Mammary epithelial cell (primary cell): ENCODE measurements at regions of chrX and their contacts with region 1.

Region 1: GRCh38 chrX:130916636-130917422 is 13.8 kb upstream of the ENOX2 start:
- DNase-seq: peak; percentile 21
- H3K4me3 ChIP-seq: no peak overlapping the region
- H3K27ac ChIP-seq: no peak overlapping the region
- H3K4me1 ChIP-seq: no peaks in the 10 kb centered on the region
- H3K27me3 ChIP-seq: no peaks in the 10 kb centered on the region
- CTCF ChIP-seq: peak; percentile 65 to 87

Region 2: GRCh38 chrX:130330706-130331105 is 586.1 kb before region 1 on chrX:
- CTCF ChIA-PET with region 1: interaction called, 7 read pairs
- dilution Hi-C with region 1: no loop called
- in situ Hi-C with region 1: no loop called
- intact Hi-C with region 1: loop called (anchors 1 kb)
- DNase-seq: peak; percentile 46
- H3K4me3 ChIP-seq: no peak overlapping the region
- H3K27ac ChIP-seq: no peak overlapping the region
- H3K4me1 ChIP-seq: no peaks in the 10 kb centered on the region
- H3K27me3 ChIP-seq: no peaks in the 10 kb centered on the region
- CTCF ChIP-seq: peak; percentile 50 to 66

Region 3: DNA sequence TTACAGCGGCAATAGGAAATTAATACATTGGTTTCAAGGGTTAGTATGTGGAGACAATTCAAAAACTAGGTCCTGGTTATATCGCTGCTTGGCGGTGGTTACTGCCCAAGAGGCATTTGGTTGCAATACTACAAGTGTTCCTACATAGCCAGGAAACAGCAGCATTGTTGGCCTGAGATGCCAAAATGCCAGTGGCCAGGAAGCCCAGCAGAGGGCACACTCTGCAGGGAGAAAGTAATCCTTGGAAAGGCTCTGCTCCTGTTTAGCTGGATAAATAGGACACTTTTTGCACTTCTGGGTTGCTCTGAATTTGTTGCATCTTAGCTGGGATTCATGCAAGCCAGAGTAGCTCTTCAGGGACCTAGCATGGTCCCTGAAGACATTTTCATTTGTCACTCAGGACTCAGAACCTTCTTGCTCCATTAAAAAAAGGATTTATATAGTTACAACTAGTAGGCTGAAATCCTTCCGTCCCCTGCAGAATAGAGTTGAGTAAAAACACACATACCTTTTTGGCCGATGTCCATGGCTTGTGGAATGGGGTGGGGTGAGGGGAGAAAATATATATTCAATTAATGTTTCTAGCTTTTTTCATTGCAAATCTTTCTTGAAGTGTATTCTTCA is 523.3 kb before region 1 on chrX:
- CTCF ChIA-PET with region 1: interaction called, 3 read pairs
- dilution Hi-C with region 1: loop called (anchors 25 kb)
- in situ Hi-C with region 1: loop called (anchors 10 to 25 kb)
- intact Hi-C with region 1: loop called (anchors 1 kb)
- DNase-seq: peak; percentile 28
- H3K4me3 ChIP-seq: no peak overlapping the region
- H3K27ac ChIP-seq: no peak overlapping the region
- H3K4me1 ChIP-seq: no peaks in the 10 kb centered on the region
- H3K27me3 ChIP-seq: no peaks in the 10 kb centered on the region
- CTCF ChIP-seq: peak; percentile 78 to 86

Region 4: DNA sequence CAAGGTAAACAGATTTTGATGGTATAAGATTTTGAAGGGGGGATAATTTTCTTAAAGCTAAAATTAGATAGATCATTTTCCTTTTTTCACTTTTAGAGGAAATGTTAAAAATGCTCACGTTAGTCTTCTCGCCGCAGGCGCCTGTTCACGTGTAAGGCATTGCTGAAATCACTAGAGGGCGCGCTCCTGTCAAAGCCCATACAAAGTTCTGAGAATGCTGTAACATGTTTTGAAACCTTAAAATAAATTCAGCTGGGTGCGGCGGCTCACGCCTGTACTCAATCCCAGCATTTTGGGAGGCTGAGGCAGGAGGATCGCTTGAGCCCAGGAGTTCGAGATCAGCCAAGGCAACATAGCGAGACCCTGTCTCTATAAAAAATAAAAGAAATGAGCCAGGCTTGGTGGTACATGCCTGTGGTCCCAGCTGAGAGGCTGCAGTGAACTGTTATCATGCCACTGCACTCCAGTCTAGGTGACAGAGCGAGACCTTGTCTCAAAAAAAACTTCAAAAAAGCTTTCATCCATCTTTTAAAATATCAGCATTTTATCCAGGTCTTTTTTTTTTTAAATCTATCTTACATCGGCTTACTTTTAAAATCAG is 377.0 kb before region 1 on chrX:
- CTCF ChIA-PET with region 1: no interaction called
- dilution Hi-C with region 1: no loop called
- in situ Hi-C with region 1: loop called (anchors 10 to 25 kb)
- intact Hi-C with region 1: loop called (anchors 1 kb)
- DNase-seq: peak; percentile 23
- H3K4me3 ChIP-seq: no peak overlapping the region
- H3K27ac ChIP-seq: no peak overlapping the region
- H3K4me1 ChIP-seq: no peaks in the 10 kb centered on the region
- H3K27me3 ChIP-seq: peaks cover 3% of the 10 kb centered on the region
- CTCF ChIP-seq: peak; percentile 53 to 66

Region 5: GRCh38 chrX:130575831-130576389 is 340.9 kb before region 1 on chrX:
- CTCF ChIA-PET with region 1: interaction called, 8 read pairs
- dilution Hi-C with region 1: no loop called
- in situ Hi-C with region 1: no loop called
- intact Hi-C with region 1: loop called (anchors 1 kb)
- DNase-seq: peak; percentile 7
- H3K4me3 ChIP-seq: no peak overlapping the region
- H3K27ac ChIP-seq: no peak overlapping the region
- H3K4me1 ChIP-seq: no peaks in the 10 kb centered on the region
- H3K27me3 ChIP-seq: no peaks in the 10 kb centered on the region
- CTCF ChIP-seq: peak; percentile 79 to 88

Region 6: GRCh38 chrX:132127743-132128142 is 1210.9 kb after region 1 on chrX and contains the start of gene FRMD7:
- CTCF ChIA-PET with region 1: no interaction called
- dilution Hi-C with region 1: no loop called
- in situ Hi-C with region 1: no loop called
- intact Hi-C with region 1: no loop called
- DNase-seq: no peak
- H3K4me3 ChIP-seq: no peak within 1 kb of the TSS
- H3K27ac ChIP-seq: no peak within 1 kb of the TSS
- H3K4me1 ChIP-seq: no peaks in the 10 kb centered on the region
- H3K27me3 ChIP-seq: no peaks in the 10 kb centered on the region
- CTCF ChIP-seq: no peak
- total RNA-seq, gene FRMD7: 0.50 TPM in 1 of 2 donors, not detected in the other